Head of caudate nucleus (tissue), 42 donors: ENCODE measurements at regions of chr11 and their contacts with region 1.

Region 1: DNA sequence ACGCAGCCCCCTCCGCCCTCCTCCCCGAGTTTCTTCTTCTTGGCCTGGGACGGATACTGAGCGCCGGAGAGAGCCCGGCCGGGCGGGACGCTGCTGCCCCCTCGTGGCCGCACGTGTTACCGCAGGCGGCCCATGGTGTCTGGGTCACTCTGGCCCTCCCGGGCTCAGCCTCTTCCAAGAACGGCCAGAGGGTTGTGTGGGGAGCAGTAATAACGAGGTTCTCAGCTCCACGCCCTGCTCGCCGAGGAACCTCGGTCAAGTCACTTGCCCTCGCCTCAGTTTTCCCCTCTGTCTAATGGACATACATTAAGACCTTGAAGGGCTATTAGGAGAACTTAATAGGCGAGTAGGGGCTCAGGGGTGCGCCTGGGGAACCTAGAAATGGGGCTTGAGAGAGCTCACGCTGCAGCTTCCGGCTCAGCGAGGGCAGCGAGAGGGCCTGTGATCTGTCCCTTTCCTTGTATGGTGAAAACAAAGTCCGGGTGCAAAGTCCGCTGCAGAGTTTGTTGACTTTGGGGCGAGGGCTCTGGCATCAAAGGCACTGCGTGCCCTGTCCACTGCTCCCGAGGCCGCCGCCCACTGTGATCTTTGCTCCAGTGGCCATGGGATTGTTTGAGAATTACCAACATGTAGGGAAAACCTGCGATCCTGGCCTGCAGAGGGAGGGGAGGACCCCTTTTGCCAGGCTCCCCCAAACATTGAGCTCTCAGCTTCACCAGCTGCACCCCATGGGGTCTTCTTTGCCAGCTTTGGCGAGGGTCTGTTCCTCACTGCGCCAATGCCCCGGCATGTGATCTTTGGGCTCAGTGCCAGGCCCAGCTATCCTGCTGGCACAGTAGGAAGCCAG is 14.4 kb upstream of the LRP5 start:
- DNase-seq: peak; percentile 30 to 92 (median 80)

Region 2: GRCh38 chr11:68257475-68258362 is 40.3 kb before region 1 on chr11:
- intact Hi-C with region 1: loop called (anchors 5 kb)
- DNase-seq: peak; percentile 90 to 100 (median 97)